Activated CD4-positive, alpha-beta T cell treated with anti-CD3 and anti-CD28 coated beads, Interleukin-2, amount 10 ng/mL, durations not matched to agents 24 days and 14 days (primary cell): ENCODE measurements at regions of chr3 and their contacts with region 1.

Region 1: DNA sequence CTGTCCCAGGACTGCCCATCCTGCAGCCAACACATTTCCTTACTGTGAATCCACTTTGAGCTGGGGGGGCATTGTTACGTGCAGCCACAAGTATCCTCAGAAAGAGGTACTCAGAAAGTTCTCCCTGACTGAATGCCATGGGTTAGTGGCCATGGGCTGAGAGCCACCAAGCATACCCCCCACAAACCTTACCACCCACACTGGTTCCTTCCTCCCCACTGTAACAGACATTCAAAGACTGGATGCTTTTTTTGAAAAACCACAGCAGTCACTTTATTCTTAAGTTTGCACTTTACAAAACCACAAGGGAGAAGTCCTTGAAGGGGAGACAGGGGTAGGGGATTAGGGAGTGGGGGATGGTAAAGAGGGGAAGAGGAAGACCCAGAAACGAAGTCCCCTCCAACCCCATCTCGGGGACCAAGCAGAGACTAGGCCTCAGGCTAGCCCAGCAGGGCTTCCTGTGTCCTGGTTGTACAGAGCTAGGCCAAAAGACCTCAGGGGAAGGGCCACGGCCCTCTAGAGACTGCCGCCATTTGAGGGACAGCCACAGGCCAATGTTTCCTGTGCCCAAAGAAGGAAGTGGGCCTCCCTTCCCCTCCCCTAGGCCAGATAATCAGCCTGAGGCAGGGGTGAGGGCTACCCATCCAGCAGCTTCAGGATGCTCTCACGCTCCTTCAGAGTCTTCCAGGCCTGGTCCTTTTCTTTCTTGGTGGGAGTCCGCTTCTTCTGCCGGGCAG is 10.1 kb upstream of the CAMK1 start:
- DNase-seq: peak; percentile 81
- H3K4me3 Mint-ChIP-seq: peak overlapping the region; percentile 59
- H3K27ac Mint-ChIP-seq: peak overlapping the region; percentile 88
- H3K4me1 Mint-ChIP-seq: peaks cover 60% of the 10 kb centered on the region
- H3K27me3 Mint-ChIP-seq: no peaks in the 10 kb centered on the region

Region 2: GRCh38 chr3:9769426-9770275 is 10.2 kb before region 1 on chr3 and contains the start of gene CAMK1:
- intact Hi-C with region 1: loop called (anchors 1 kb)
- DNase-seq: peak; percentile 93
- H3K4me3 Mint-ChIP-seq: peak within 1 kb of the TSS; percentile 82
- H3K27ac Mint-ChIP-seq: peak within 1 kb of the TSS; percentile 80
- H3K4me1 Mint-ChIP-seq: peaks cover 43% of the 10 kb centered on the region
- H3K27me3 Mint-ChIP-seq: no peaks in the 10 kb centered on the region
- total RNA-seq, gene CAMK1: 81.0 and 83.7 TPM in 2 replicates

Region 3: GRCh38 chr3:9809615-9810432 is 29.9 kb after region 1 on chr3 and contains the start of gene TTLL3:
- intact Hi-C with region 1: no loop called
- DNase-seq: peak; percentile 84
- H3K4me3 Mint-ChIP-seq: peak within 1 kb of the TSS; percentile 82
- H3K27ac Mint-ChIP-seq: peak within 1 kb of the TSS; percentile 92
- H3K4me1 Mint-ChIP-seq: peaks cover 37% of the 10 kb centered on the region
- H3K27me3 Mint-ChIP-seq: no peaks in the 10 kb centered on the region
- total RNA-seq, gene TTLL3: 33.2 and 37.7 TPM in 2 replicates

Region 4: GRCh38 chr3:9994086-9994844 is 214.4 kb after region 1 on chr3:
- intact Hi-C with region 1: no loop called
- DNase-seq: no peak
- H3K4me3 Mint-ChIP-seq: no peak overlapping the region
- H3K27ac Mint-ChIP-seq: no peak overlapping the region
- H3K4me1 Mint-ChIP-seq: peaks cover 6% of the 10 kb centered on the region
- H3K27me3 Mint-ChIP-seq: no peaks in the 10 kb centered on the region